ENCODE measurements at regions of chr9 and their contacts with region 1.

Region 1: GRCh38 chr9:20622330-20623020 is at the start of gene MLLT3:
- DNase-seq: peak; percentile 94
- CTCF ChIP-seq: no peak

Region 2: GRCh38 chr9:19493174-19493811 is 1129.2 kb before region 1 on chr9:
- in situ Hi-C with region 1: loop called (anchors 25 kb)
- DNase-seq: peak; percentile 63
- CTCF ChIP-seq: peak; percentile 73

Region 3: GRCh38 chr9:19925817-19926503 is 696.5 kb before region 1 on chr9:
- in situ Hi-C with region 1: loop called (anchors 10 kb)
- DNase-seq: peak; percentile 82
- CTCF ChIP-seq: peak; percentile 95

Region 4: GRCh38 chr9:20356403-20357035 is 266.0 kb before region 1 on chr9:
- in situ Hi-C with region 1: loop called (anchors 10 kb)
- DNase-seq: peak; percentile 48
- CTCF ChIP-seq: peak; percentile 79

Region 5: GRCh38 chr9:20941174-20941690 is 318.8 kb after region 1 on chr9:
- in situ Hi-C with region 1: loop called (anchors 5 kb)
- DNase-seq: peak; percentile 54
- CTCF ChIP-seq: peak; percentile 83

Region 6: GRCh38 chr9:21110708-21111576 is 488.5 kb after region 1 on chr9:
- in situ Hi-C with region 1: loop called (anchors 10 kb)
- DNase-seq: peak; percentile 57
- CTCF ChIP-seq: peak; percentile 75

Measured in GM13977 (cell line).